ENCODE measurements at regions of chr15 and their contacts with region 1.

Region 1: DNA sequence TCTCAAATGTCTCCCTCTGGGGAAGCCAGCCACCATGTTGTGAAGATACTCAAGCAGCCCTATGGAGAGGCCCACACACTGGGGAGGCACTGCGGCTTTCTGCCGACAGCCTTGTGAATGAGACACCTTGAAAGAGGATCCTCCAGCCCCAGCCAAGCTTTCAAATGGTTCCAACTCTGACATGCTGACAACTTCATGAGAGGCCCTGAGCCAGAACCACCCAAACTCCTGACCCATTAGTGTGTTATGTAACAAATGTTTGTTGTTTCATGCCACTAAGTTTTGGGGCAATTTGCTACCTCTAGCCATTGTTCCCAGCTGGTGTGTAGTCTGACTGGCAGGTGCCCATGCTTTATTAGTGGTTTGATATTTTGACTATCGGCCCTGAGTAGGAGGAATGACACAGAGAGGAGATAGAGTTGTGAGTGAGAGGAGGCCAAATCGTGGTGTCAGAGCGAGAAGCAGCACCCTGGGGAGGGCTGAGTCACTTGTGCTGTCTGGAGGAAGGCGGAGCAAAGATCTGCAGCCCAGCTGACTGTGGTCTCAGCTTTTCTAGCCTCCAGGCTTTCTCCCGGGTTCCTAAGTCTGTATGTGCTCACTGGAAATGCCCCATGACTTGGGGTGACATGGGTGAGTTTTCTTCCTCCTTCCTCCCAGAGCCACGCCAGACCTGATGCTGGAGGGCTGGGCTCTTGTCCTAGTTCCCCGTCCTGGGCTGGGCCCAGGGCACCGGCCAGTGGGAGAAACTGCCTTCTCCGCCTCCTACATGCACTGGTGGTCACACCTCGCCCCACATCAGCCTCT is 56.7 kb upstream of the BLM start:
- DNase-seq: peak; percentile 51
- ATAC-seq: peak; percentile 90
- H3K4me3 Mint-ChIP-seq: peak overlapping the region; percentile 81
- H3K27ac Mint-ChIP-seq: peak overlapping the region; percentile 91
- H3K4me1 Mint-ChIP-seq: peaks cover 76% of the 10 kb centered on the region
- H3K27me3 Mint-ChIP-seq: peaks cover 19% of the 10 kb centered on the region
- CTCF ChIP-seq: no peak

Region 2: GRCh38 chr15:90184786-90185569 is 475.4 kb before region 1 on chr15:
- CTCF ChIA-PET with region 1: no interaction called
- POLR2A ChIA-PET with region 1: interaction called, 10 read pairs
- intact Hi-C with region 1: loop called (anchors 10 kb)
- DNase-seq: peak; percentile 77
- ATAC-seq: peak; percentile 77
- H3K4me3 Mint-ChIP-seq: peak overlapping the region; percentile 90
- H3K27ac Mint-ChIP-seq: peak overlapping the region; percentile 88
- H3K4me1 Mint-ChIP-seq: peaks cover 75% of the 10 kb centered on the region
- H3K27me3 Mint-ChIP-seq: no peaks in the 10 kb centered on the region
- CTCF ChIP-seq: no peak

Region 3: DNA sequence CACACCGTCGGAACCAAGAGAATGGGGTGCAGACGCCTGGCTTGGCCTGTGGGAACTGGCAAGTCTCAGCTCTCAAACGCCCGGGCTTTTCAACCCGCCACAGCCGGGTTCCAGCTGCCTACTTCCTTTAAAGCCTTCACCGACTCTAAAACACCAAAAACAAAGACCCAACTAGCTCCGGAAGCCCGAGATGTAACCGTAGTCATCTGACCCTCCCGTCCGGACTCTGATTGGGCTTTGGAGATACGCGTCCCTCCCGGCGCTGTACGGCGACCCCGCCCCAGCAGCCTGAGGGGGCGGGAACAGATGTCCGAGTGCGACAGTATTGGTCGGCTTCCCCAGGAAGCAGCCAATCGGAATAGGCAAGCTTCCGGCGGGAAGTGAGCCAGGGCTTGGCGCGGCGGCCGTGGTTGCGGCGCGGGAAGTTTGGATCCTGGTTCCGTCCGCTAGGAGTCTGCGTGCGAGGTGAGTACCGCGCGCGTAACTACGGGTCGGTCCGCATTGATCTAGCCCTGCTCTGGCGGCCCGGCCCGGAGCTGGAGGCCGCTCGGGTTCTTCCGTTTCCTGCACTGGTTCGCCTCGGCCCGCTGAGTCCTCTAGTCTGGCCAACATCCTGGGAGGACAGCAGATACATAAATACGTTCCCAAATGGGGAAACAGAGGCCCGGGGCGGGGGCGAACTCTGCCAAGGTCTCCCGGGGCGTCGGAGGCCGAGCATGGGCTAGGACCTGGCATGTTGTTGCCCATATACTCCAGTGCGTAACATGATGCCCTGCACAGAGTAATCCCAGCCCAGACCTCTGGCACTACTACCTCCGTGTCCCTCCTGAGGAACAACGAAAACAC is 56.8 kb after region 1 on chr15 and contains the start of gene BLM:
- CTCF ChIA-PET with region 1: no interaction called
- POLR2A ChIA-PET with region 1: interaction called, 10 read pairs
- intact Hi-C with region 1: loop called (anchors 1 kb)
- DNase-seq: peak; percentile 87
- ATAC-seq: peak; percentile 99
- H3K4me3 Mint-ChIP-seq: peak within 1 kb of the TSS; percentile 96
- H3K27ac Mint-ChIP-seq: peak within 1 kb of the TSS; percentile 94
- H3K4me1 Mint-ChIP-seq: peaks cover 30% of the 10 kb centered on the region
- H3K27me3 Mint-ChIP-seq: no peaks in the 10 kb centered on the region
- CTCF ChIP-seq: no peak
- total RNA-seq, gene BLM: 18.2 and 23.4 TPM in 2 replicates